ENCODE measurements at regions of chr14 and their contacts with region 1.

Region 1: GRCh38 chr14:64540208-64541157 is at the start of gene HSPA2:
- H3K4me3 ChIP-seq: peak within 1 kb of the TSS; percentile 57
- H3K27ac ChIP-seq: peak within 1 kb of the TSS; percentile 81
- H3K4me1 ChIP-seq: peaks cover 13% of the 10 kb centered on the region
- CTCF ChIP-seq: peak; percentile 84

Region 2: DNA sequence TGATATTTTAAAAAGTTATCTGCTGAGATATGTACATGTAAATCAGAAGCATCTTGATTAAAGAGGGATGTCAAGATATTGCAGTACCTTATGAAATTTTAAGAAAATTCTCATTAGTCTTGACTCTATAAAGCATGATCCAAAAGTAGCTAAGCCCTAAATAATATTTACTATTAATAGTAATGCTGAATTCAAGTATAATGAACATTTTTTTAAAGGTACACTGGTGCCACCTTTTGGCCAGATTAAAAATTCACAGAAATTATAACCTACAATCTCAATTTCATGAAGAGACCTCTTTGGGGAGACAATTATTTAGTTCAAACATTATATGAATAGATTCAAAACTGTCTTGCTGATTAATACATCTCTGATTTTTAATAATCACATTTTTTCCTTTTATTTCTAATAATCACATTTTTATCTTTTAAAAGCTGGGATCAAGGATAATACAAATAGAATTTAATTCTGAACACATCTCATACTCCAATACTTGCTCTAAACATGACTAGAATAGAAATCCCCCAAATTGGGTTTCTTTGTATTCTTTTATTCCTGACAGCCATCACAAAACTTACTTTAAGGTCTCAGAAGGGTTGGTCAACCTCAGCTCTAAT is 61.7 kb before region 1 on chr14:
- CTCF ChIA-PET with region 1: no interaction called
- POLR2A ChIA-PET with region 1: no interaction called
- H3K4me3 ChIP-seq: no peak overlapping the region
- H3K27ac ChIP-seq: no peak overlapping the region
- H3K4me1 ChIP-seq: peaks cover 6% of the 10 kb centered on the region; the same call in 1 of the 2 replicates
- CTCF ChIP-seq: no peak

Region 3: DNA sequence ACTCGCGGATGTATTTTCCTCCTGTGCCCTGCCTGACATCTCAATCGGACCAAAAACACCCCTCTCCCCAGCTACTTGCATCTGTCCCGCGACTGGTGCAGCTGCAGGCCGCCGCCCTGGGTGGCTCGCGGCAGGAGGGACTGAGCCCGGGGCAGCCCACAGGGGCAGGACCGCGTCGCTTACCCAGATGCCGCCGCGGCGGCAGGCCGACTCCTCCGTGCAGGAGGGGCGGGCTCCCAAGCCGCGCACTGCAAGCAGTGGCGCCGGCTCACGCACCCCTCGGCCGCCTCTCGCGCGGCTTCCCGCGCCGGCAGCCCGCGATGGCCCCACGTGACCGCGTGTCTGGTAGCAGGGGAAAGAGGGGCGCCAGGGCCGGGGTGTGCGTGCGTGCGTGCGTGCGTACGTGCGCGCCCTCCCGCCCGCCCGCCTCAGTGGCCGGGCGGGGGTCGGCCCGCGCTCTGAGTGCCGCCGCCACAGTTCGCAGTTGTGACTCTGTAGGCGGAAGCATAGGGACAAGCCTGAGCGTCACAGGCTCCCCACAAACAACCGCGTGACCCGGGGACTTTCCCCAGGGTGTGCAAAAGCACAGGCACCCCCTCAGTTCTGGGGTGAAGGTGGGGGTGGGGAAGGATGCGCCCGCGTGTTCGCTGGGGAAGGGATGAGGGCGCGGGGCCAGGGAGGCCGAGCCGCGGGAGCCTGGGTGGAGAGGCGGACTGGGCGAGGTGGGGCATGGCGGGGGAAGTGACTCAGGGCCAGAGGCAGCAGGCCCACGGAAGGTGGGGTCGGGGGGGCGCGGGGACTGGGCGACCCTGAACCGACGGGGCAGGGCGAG is 36.8 kb before region 1 on chr14 and contains the start of gene ZBTB25:
- CTCF ChIA-PET with region 1: interaction called, 3 read pairs
- POLR2A ChIA-PET with region 1: interaction called, 54 read pairs
- H3K4me3 ChIP-seq: peak within 1 kb of the TSS; percentile 62
- H3K27ac ChIP-seq: peak within 1 kb of the TSS; percentile 99
- H3K4me1 ChIP-seq: peaks cover 23% of the 10 kb centered on the region
- CTCF ChIP-seq: no peak

Region 4: GRCh38 chr14:64556526-64556925 is 16.0 kb after region 1 on chr14:
- CTCF ChIA-PET with region 1: interaction called, 5 read pairs
- POLR2A ChIA-PET with region 1: interaction called, 18 read pairs
- H3K4me3 ChIP-seq: no peak overlapping the region
- H3K27ac ChIP-seq: no peak overlapping the region
- H3K4me1 ChIP-seq: no peaks in the 10 kb centered on the region; the same call in 1 of the 2 replicates
- CTCF ChIP-seq: no peak

Region 5: GRCh38 chr14:64614805-64615391 is 74.4 kb after region 1 on chr14:
- CTCF ChIA-PET with region 1: interaction called, 3 read pairs
- POLR2A ChIA-PET with region 1: interaction called, 11 read pairs
- H3K4me3 ChIP-seq: no peak overlapping the region
- H3K27ac ChIP-seq: no peak overlapping the region
- H3K4me1 ChIP-seq: peaks cover 5% of the 10 kb centered on the region
- CTCF ChIP-seq: no peak

Region 6: GRCh38 chr14:64636208-64636979 is 95.9 kb after region 1 on chr14:
- CTCF ChIA-PET with region 1: interaction called, 14 read pairs
- POLR2A ChIA-PET with region 1: interaction called, 40 read pairs
- H3K4me3 ChIP-seq: no peak overlapping the region
- H3K27ac ChIP-seq: no peak overlapping the region
- H3K4me1 ChIP-seq: no peaks in the 10 kb centered on the region
- CTCF ChIP-seq: peak; percentile 57

Measured in HEK293 (cell line).